Natural killer cell (primary cell): ENCODE measurements at regions of chr1 and their contacts with region 1.

Region 1: DNA sequence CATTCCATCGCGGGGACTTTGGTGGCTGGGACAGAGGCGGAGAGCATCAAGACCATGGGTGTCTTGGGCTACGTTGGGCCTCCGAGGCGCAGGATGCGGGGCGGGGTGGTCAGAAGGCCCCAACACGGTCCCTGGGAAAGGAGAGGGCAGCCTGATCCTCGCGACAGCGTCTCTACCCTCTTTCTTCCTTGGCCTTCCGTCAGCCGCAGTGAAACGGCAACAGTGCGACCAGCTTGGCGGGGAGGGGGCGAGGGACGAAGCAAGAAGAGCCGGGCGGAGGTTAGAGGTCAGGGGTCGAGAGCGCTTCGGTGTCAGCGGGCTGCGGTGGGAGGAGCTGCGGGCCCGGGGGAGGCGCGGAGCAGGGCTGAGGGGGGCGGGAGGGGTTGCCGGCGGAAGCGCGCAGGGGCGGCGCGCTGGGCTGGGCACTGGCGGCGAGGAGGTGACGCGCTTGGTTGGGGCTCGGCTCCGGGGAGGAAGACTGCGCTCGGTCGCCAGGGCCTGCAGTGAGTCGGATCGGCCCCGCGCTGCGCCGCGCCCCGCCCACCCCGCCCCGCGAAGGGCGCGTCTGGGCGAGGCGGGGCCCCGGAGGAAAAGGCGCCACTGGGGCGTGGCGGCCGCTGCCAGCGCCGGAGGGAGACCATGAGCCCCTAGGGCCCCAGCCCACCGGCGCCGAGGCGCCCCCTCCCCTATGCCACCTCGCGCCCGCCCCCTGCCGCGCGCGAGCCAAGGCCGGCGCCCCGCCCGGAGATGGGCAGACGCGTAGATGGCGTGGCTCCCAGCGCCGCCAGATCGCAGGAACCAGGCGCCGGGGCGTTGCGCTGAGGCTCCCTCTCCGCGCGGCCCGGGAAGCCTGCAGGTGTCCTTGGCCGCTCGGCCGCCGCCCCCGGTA is at the start of gene KCNC4:
- DNase-seq: peak; percentile 74 to 97
- ATAC-seq: peak; percentile 87 to 95 (median 90)
- H3K4me3 ChIP-seq: peak within 1 kb of the TSS; percentile 52
- H3K4me3 Mint-ChIP-seq: peak within 1 kb of the TSS; percentile 92
- H3K27ac ChIP-seq: peak within 1 kb of the TSS; percentile 75
- H3K27ac Mint-ChIP-seq: peak within 1 kb of the TSS; percentile 68 to 94
- H3K4me1 ChIP-seq: peaks cover 28% of the 10 kb centered on the region
- H3K4me1 Mint-ChIP-seq: peaks cover 8 to 35% of the 10 kb centered on the region in 2 donors
- H3K27me3 ChIP-seq: peaks cover 5% of the 10 kb centered on the region
- H3K27me3 Mint-ChIP-seq: peaks cover 0 to 9% of the 10 kb centered on the region in 2 donors
- CTCF ChIP-seq: no peak
- total RNA-seq, gene KCNC4: 2.5 to 3.9 (median 3.3) TPM

Region 2: GRCh38 chr1:110262846-110263631 is 53.1 kb after region 1 on chr1:
- intact Hi-C with region 1: loop called (anchors 5 kb)
- DNase-seq: peak in 1 of 2 donors; percentile 35
- ATAC-seq: peak; percentile 65 to 73 (median 70)
- H3K4me3 ChIP-seq: no peak overlapping the region
- H3K4me3 Mint-ChIP-seq: no peak overlapping the region
- H3K27ac ChIP-seq: no peak overlapping the region
- H3K27ac Mint-ChIP-seq: no peak overlapping the region
- H3K4me1 ChIP-seq: no peaks in the 10 kb centered on the region
- H3K4me1 Mint-ChIP-seq: peaks cover 5 to 12% of the 10 kb centered on the region in 2 donors
- H3K27me3 ChIP-seq: no peaks in the 10 kb centered on the region
- H3K27me3 Mint-ChIP-seq: peaks cover 17 to 30% of the 10 kb centered on the region in 2 donors
- CTCF ChIP-seq: no peak

Region 3: DNA sequence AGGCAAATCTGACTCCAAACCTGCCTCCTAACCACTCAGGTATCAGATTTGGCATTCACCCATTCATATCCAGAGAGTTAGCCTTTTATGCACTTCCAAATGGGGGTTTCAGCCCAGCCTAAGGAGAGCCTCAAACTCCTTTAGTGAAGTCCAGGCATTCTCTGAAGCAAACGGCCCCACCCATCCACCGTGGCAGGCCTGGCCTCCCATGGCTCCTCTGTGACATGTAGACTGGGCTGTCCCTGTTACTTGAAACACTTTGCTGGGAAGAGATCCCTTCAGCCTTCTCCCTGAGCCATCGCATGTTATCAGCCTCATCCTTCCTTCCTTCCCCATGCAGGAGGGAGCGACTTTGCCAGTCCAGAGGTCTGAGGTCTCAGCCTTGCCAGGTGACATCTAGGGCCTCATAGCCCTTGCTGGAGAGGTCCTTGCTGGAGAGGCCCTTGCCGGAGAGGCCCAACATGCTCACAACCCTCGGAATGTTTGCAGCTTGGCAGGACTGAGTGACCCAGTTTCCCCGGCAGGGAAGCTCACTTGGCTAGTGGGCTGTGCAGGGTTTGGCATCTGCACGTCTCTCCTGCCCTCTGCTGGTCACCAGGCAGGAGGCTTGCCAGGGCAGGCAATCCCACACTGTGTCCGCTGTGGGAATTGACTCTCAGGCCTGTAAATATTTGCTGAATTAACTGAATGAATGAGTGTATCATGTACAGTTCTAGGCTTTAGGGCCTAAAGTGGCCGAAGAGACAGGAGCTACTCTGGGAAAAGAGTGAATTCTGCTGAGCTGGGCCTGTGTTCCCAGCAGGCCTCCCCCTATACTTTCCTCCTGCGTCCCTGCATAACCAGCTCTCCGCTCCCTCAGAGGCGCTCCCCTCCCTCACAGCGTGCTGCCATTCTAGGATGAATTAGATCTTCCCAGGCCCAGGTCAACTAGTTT is 102.5 kb after region 1 on chr1:
- intact Hi-C with region 1: loop called (anchors 1 kb)
- DNase-seq: peak; percentile 57 to 87
- ATAC-seq: peak; percentile 85 to 98 (median 98)
- H3K4me3 ChIP-seq: no peak overlapping the region
- H3K4me3 Mint-ChIP-seq: no peak overlapping the region
- H3K27ac ChIP-seq: no peak overlapping the region
- H3K27ac Mint-ChIP-seq: no peak overlapping the region
- H3K4me1 ChIP-seq: peaks cover 4% of the 10 kb centered on the region
- H3K4me1 Mint-ChIP-seq: no peaks in the 10 kb centered on the region
- H3K27me3 ChIP-seq: no peaks in the 10 kb centered on the region
- H3K27me3 Mint-ChIP-seq: no peaks in the 10 kb centered on the region
- CTCF ChIP-seq: peak; percentile 93

Region 4: GRCh38 chr1:110338886-110339406 is 129.0 kb after region 1 on chr1 and contains the start of gene RBM15:
- intact Hi-C with region 1: loop called (anchors 1 kb)
- DNase-seq: peak; percentile 91 to 100
- ATAC-seq: peak; percentile 66 to 88 (median 74)
- H3K4me3 ChIP-seq: peak within 1 kb of the TSS; percentile 98
- H3K4me3 Mint-ChIP-seq: no peak within 1 kb of the TSS
- H3K27ac ChIP-seq: peak within 1 kb of the TSS; percentile 99
- H3K27ac Mint-ChIP-seq: no peak within 1 kb of the TSS
- H3K4me1 ChIP-seq: peaks cover 30% of the 10 kb centered on the region
- H3K4me1 Mint-ChIP-seq: peaks cover 50 to 55% of the 10 kb centered on the region in 2 donors
- H3K27me3 ChIP-seq: no peaks in the 10 kb centered on the region
- H3K27me3 Mint-ChIP-seq: no peaks in the 10 kb centered on the region
- CTCF ChIP-seq: no peak
- total RNA-seq, gene RBM15: 81.8 to 109 (median 87.0) TPM

Region 5: GRCh38 chr1:110407260-110408210 is 197.6 kb after region 1 on chr1 and contains the start of gene LAMTOR5:
- intact Hi-C with region 1: loop called (anchors 5 kb)
- DNase-seq: peak; percentile 89 to 95
- ATAC-seq: peak; percentile 93 to 97 (median 96)
- H3K4me3 ChIP-seq: peak within 1 kb of the TSS; percentile 88
- H3K4me3 Mint-ChIP-seq: peak within 1 kb of the TSS; percentile 99
- H3K27ac ChIP-seq: peak within 1 kb of the TSS; percentile 89
- H3K27ac Mint-ChIP-seq: peak within 1 kb of the TSS; percentile 98 to 100
- H3K4me1 ChIP-seq: peaks cover 20% of the 10 kb centered on the region
- H3K4me1 Mint-ChIP-seq: peaks cover 24 to 30% of the 10 kb centered on the region in 2 donors
- H3K27me3 ChIP-seq: no peaks in the 10 kb centered on the region
- H3K27me3 Mint-ChIP-seq: no peaks in the 10 kb centered on the region
- CTCF ChIP-seq: no peak
- total RNA-seq, gene LAMTOR5: 86.1 to 102 (median 90.4) TPM